ENCODE measurements at regions of chr14 and their contacts with region 1.

Region 1: GRCh38 chr14:57293866-57294837 is 25.4 kb downstream of the AP5M1 start:
- DNase-seq: no peak
- ATAC-seq: no peak
- H3K4me3 ChIP-seq: no peak overlapping the region
- H3K27ac ChIP-seq: no peak overlapping the region
- H3K4me1 ChIP-seq: no peaks in the 10 kb centered on the region
- H3K27me3 ChIP-seq: no peaks in the 10 kb centered on the region
- CTCF ChIP-seq: no peak; a peak in 2 of 6 replicates
- EP300 ChIP-seq: no peak
- POLR2A ChIP-seq: no peak
- RAD21 ChIP-seq: no peak

Region 2: GRCh38 chr14:57199921-57200320 is 94.2 kb before region 1 on chr14:
- CTCF ChIA-PET with region 1: no interaction called
- POLR2A ChIA-PET with region 1: no interaction called
- RAD21 ChIA-PET with region 1: no interaction called
- SMC1A ChIA-PET with region 1: interaction called, 5 read pairs
- in situ Hi-C with region 1: no loop called
- intact Hi-C with region 1: loop called (anchors 5 kb)
- DNase-seq: no peak
- ATAC-seq: no peak
- H3K4me3 ChIP-seq: no peak overlapping the region
- H3K27ac ChIP-seq: no peak overlapping the region
- H3K4me1 ChIP-seq: no peaks in the 10 kb centered on the region
- H3K27me3 ChIP-seq: no peaks in the 10 kb centered on the region
- CTCF ChIP-seq: no peak
- EP300 ChIP-seq: no peak
- POLR2A ChIP-seq: no peak
- RAD21 ChIP-seq: no peak

Region 3: DNA sequence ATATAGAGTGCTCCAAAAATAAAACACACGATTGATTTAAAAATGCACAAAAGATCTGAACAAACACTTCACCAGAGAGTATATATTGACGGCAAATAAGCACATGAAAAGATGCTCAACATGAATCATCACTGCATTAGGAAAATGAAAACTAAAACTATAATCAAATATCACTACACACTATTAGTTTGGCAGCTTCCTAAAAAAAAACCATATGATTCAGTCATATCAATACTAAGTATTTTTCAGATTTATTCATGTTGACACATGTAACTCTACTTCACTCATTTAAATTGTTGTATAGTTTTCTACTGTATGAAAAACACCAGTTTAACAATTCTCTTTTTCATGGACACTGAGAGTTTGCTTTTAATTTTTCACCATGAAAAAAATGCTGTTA is 67.1 kb before region 1 on chr14:
- CTCF ChIA-PET with region 1: no interaction called
- POLR2A ChIA-PET with region 1: no interaction called
- RAD21 ChIA-PET with region 1: no interaction called
- SMC1A ChIA-PET with region 1: no interaction called
- in situ Hi-C with region 1: no loop called
- intact Hi-C with region 1: loop called (anchors 5 kb)
- DNase-seq: no peak
- ATAC-seq: peak; percentile 74
- H3K4me3 ChIP-seq: no peak overlapping the region
- H3K27ac ChIP-seq: no peak overlapping the region
- H3K4me1 ChIP-seq: no peaks in the 10 kb centered on the region
- H3K27me3 ChIP-seq: no peaks in the 10 kb centered on the region
- CTCF ChIP-seq: no peak
- EP300 ChIP-seq: no peak
- POLR2A ChIP-seq: no peak
- RAD21 ChIP-seq: no peak

Measured in GM12878 (cell line).